ENCODE measurements at regions of chr10 and their contacts with region 1.

Region 1: DNA sequence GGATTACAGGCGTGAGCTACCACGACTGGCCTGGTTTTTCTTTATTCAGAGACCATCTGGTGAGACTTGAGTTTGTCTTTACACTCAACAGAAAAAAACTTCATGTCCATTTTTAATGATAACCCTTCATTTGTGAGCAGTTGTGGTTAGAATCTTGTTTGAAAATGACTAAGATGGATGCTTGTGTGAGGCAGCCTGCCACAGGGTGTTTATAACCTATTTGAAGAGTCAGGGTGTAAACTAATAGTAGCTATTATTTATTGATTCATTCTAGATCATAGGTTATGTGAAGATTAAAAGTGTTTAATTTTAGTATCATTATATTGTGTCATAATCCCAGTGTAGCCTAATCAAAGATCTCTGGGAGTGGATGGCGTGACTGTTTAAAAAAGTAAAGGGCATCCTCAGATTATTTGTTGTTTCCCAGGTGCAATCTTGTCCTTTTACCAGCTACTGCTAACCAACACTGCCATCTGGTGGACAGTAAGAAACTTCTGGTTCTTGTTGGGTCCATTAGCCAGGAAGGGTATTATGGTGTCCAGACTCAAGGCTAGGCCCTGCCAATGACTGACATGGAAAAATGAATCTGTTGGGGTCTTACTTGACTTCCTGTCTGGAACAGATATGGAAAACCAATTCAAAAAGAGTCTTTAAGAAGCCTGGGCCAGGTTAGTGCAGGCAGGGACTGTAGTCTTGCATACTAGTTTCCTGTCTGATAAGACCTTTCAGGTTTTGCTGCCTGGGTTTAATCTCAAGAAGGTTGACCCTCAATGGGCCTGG is 24.9 kb downstream of the NRBF2 start:
- DNase-seq: peak in 2 of 5 donors; percentile 34 to 45
- ATAC-seq: peak; percentile 52 to 76 (median 72)
- H3K4me3 ChIP-seq: no peak overlapping the region
- H3K27ac ChIP-seq: no peak overlapping the region
- H3K4me1 ChIP-seq: peaks cover 0 to 19% (median 8%) of the 10 kb centered on the region in 12 donors
- H3K27me3 ChIP-seq: no peaks in the 10 kb centered on the region
- CTCF ChIP-seq: peak; percentile 71 to 88 (median 81)
- POLR2A ChIP-seq: no peak

Region 2: GRCh38 chr10:62443866-62444265 is 714.2 kb before region 1 on chr10:
- intact Hi-C with region 1: loop called in 8 of 10 experiments (anchors 2 to 5 kb)
- DNase-seq: no peak
- ATAC-seq: no peak
- H3K4me3 ChIP-seq: no peak overlapping the region
- H3K27ac ChIP-seq: no peak overlapping the region
- H3K4me1 ChIP-seq: no peaks in the 10 kb centered on the region
- H3K27me3 ChIP-seq: no peaks in the 10 kb centered on the region
- CTCF ChIP-seq: no peak
- POLR2A ChIP-seq: no peak

Region 3: DNA sequence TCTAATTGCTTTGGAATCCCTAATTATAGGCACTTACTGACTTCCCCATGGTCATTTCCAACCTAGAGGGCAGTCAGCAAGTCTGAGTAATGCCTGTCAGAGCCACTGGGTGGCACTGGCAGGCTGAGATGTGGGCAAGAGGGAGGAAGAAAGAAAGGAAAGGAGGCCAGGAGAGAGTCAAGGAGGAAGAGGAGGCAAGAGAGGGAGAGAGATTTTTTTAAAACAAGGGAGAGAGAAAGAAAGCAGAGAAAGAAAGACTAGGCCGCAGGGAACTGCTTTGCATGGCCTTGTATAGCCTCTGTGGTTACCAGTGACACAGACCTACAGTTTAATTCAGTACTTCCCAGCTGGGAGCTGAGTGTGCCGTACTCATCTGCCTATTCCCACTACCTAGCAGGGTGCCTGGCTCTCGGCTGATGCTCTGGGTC is 563.9 kb before region 1 on chr10:
- intact Hi-C with region 1: loop called (anchors 1 to 5 kb)
- DNase-seq: peak; percentile 51 to 79 (median 58)
- ATAC-seq: peak in 3 of 4 donors; percentile 83 to 94 (median 86)
- H3K4me3 ChIP-seq: no peak overlapping the region
- H3K27ac ChIP-seq: no peak overlapping the region
- H3K4me1 ChIP-seq: peaks cover 0 to 5% (median 0%) of the 10 kb centered on the region in 12 donors
- H3K27me3 ChIP-seq: no peaks in the 10 kb centered on the region
- CTCF ChIP-seq: peak; percentile 71 to 91 (median 86)
- POLR2A ChIP-seq: no peak

Region 4: DNA sequence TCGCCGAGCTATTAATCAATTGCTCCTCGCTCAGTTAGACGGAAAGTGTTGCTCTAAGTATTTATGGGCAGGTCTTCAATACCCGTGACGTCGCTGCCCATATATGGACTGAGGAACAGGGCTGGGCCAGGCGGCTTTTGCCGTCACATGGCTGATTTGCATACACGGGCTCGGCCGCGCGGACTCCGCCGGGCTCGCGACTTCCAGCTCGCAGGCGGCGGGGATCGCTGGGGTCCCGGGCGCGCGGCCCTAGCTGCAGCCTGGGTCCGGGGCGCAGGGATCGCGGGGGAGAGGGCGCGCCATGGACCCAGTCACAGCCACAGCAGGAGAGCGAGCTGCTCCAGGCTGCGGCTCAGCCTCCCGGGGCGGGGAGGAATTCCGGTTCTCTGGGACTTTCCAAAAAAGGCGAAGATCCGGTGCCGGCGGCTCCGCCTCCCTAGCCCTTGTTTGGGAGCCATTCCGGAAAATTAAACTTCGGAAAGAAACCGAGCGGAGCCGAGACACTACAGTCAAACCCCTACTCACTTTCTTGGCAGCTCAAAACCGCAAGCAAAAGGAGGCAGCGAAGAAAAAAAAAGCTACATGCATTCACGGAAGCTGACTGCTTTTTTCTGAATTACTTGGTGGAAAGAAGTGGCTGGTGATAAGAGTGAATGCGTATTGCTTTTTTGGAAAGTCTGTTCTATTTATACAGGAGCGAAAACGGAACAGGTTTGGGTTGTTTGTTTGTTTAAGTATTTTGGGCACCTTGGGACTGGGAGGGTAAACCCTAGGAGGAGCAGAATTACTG is 341.5 kb before region 1 on chr10 and contains the start of gene EGR2:
- intact Hi-C with region 1: loop called in 6 of 10 experiments (anchors 5 to 10 kb)
- DNase-seq: peak; percentile 93 to 95 (median 94)
- ATAC-seq: peak; percentile 75 to 93 (median 86)
- H3K4me3 ChIP-seq: peak within 1 kb of the TSS; percentile 37 to 91 (median 78)
- H3K27ac ChIP-seq: peak within 1 kb of the TSS; percentile 63 to 93 (median 87)
- H3K4me1 ChIP-seq: peaks cover 0 to 48% (median 28%) of the 10 kb centered on the region in 12 donors
- H3K27me3 ChIP-seq: peaks cover 0 to 50% (median 17%) of the 10 kb centered on the region in 9 donors
- CTCF ChIP-seq: no peak
- POLR2A ChIP-seq: no peak
- total RNA-seq, gene EGR2: 0.37 to 8.5 (median 1.9) TPM

Region 5: GRCh38 chr10:63083904-63084689 is 73.9 kb before region 1 on chr10:
- intact Hi-C with region 1: loop called in 4 of 10 experiments (anchors 5 to 10 kb)
- DNase-seq: peak in 4 of 5 donors; percentile 53 to 74 (median 56)
- ATAC-seq: peak; percentile 64 to 94 (median 82)
- H3K4me3 ChIP-seq: no peak overlapping the region
- H3K27ac ChIP-seq: peak overlapping the region in 6 of 12 donors; percentile 6 to 54 (median 20)
- H3K4me1 ChIP-seq: peaks cover 0 to 14% (median 0%) of the 10 kb centered on the region in 12 donors
- H3K27me3 ChIP-seq: no peaks in the 10 kb centered on the region
- CTCF ChIP-seq: peak; percentile 52 to 78 (median 70)
- POLR2A ChIP-seq: no peak

Region 6: GRCh38 chr10:63106111-63106755 is 51.8 kb before region 1 on chr10:
- intact Hi-C with region 1: loop called in 1 of 10 experiments (anchors 10 kb)
- DNase-seq: peak in 4 of 5 donors; percentile 38 to 71 (median 46)
- ATAC-seq: peak in 2 of 4 donors; percentile 22 to 66
- H3K4me3 ChIP-seq: peak overlapping the region in 3 of 12 donors; percentile 5 to 18 (median 13)
- H3K27ac ChIP-seq: peak overlapping the region in 7 of 12 donors; percentile 51 to 75 (median 61)
- H3K4me1 ChIP-seq: peaks cover 0 to 22% (median 6%) of the 10 kb centered on the region in 12 donors
- H3K27me3 ChIP-seq: no peaks in the 10 kb centered on the region
- CTCF ChIP-seq: no peak
- POLR2A ChIP-seq: no peak

Region 7: GRCh38 chr10:63313066-63313717 is 155.2 kb after region 1 on chr10:
- intact Hi-C with region 1: no loop called
- DNase-seq: no peak
- ATAC-seq: no peak
- H3K4me3 ChIP-seq: no peak overlapping the region
- H3K27ac ChIP-seq: no peak overlapping the region
- H3K4me1 ChIP-seq: peaks cover 0 to 8% (median 2%) of the 10 kb centered on the region in 12 donors
- H3K27me3 ChIP-seq: no peaks in the 10 kb centered on the region
- CTCF ChIP-seq: no peak
- POLR2A ChIP-seq: no peak

Measured in heart left ventricle (tissue), 16 donors.